ENCODE measurements at regions of chr1 and their contacts with region 1.

Region 1: DNA sequence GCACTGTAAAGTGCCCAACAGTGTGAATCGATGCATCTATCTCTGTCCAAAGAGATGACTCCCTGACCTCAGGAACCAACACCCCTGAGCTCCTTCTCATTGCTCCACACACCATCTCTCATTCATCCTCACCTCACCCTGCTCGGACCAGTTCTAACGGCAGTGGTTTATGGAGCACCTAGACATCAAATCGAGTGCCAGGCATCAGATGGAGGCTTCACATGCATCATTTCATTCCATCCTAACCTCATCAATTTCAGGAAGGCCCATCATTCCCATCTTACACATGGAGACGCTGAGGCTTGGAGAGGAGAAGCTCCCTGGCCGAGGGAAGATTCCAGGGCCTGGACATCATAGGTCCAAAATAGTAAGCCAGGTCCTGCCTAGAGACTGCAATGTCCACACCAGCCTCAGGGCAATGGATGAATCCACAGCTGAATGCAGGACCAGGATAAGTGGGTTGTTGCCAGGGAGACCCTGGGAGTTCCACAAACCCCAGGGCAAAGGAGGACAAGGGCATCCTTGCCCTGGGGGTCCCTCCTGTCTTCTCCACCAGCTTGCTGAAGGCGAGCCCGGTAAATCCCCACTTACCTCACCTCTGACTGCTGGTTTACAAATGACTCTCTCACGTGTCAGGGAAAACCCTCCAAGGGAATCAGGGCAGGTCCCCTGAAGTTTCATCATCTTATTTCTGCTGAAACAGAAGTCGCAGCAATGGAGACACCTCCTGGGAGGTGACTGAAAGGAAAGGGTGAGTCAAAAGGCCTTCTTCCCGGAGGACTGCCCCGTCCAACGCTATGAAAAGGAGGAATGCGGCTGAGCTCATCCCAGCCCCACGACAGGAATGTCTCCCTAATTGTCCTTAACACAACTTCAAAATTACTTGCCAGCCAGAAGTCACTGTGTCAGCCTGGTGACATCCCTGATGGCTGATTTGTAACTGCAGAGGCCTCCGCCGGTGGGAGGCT is 9.0 kb upstream of the IFFO2 start:
- DNase-seq: no peak
- ATAC-seq: peak in 4 of 8 donors; percentile 39 to 61 (median 50)
- H3K4me3 ChIP-seq: no peak overlapping the region
- H3K27ac ChIP-seq: no peak overlapping the region
- H3K4me1 ChIP-seq: peaks cover 0 to 10% (median 0%) of the 10 kb centered on the region in 9 donors
- H3K27me3 ChIP-seq: peaks cover 0 to 9% (median 0%) of the 10 kb centered on the region in 7 donors
- CTCF ChIP-seq: no peak

Region 2: GRCh38 chr1:19062258-19063029 is 97.0 kb after region 1 on chr1:
- intact Hi-C with region 1: no loop called
- DNase-seq: no peak
- ATAC-seq: no peak
- H3K4me3 ChIP-seq: no peak overlapping the region
- H3K27ac ChIP-seq: no peak overlapping the region
- H3K4me1 ChIP-seq: peaks cover 0 to 9% (median 2%) of the 10 kb centered on the region in 9 donors
- H3K27me3 ChIP-seq: peaks cover 0 to 16% (median 14%) of the 10 kb centered on the region in 7 donors
- CTCF ChIP-seq: no peak

Region 3: GRCh38 chr1:19074902-19075721 is 109.6 kb after region 1 on chr1:
- intact Hi-C with region 1: loop called in 1 of 10 experiments (anchors 10 kb)
- DNase-seq: peak in 1 of 2 donors; percentile 55
- ATAC-seq: peak; percentile 26 to 73 (median 52)
- H3K4me3 ChIP-seq: no peak overlapping the region
- H3K27ac ChIP-seq: peak overlapping the region in 1 of 10 donors; percentile 4
- H3K4me1 ChIP-seq: peaks cover 0 to 28% (median 26%) of the 10 kb centered on the region in 9 donors
- H3K27me3 ChIP-seq: no peaks in the 10 kb centered on the region
- CTCF ChIP-seq: no peak

Region 4: GRCh38 chr1:19300211-19300610 is 334.7 kb after region 1 on chr1:
- intact Hi-C with region 1: no loop called
- DNase-seq: no peak
- ATAC-seq: no peak
- H3K4me3 ChIP-seq: no peak overlapping the region
- H3K27ac ChIP-seq: no peak overlapping the region
- H3K4me1 ChIP-seq: no peaks in the 10 kb centered on the region
- H3K27me3 ChIP-seq: no peaks in the 10 kb centered on the region
- CTCF ChIP-seq: no peak

Measured in heart right ventricle (tissue), 16 donors.